ENCODE measurements at regions of chr19 and their contacts with region 1.

Region 1: DNA sequence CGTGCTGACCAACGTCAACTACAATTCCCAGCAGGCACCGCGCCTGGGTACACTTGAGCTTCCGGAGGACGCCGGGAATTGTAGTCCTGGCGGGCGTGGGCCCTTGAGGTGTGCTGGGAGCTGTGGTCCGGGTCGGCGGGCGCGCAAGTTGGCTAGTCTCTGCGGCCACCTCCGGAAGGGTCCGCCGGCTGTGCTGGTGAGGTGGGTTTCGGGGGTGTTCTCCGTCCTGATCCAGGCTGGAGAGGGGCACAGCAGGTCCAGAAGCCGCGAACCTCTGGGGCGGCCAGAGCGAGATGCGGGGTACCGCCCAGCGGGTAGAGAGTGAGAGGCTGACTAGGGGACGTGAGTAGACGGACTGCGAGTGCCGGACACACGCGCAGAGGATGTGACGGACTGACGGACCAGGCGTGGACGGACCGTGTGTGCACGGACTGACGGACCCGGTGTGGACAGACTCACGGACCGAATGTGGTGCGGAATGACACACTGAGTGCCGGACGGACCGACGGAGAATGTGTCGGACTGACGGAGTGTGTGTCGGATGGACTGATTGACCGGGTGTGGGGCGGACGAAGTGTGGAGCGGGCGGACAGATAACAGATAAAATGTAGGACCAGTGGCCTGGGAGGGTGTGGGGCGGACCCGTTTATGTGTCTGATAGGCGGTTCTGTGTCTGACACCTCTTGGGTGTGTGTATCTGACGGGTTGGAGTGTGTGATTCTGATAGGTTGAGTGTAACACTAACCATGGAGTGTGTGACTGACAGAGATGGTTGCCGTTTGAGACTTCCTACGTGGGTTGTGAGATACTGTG is at the start of gene ZSCAN22:
- DNase-seq: peak; percentile 98 to 99 (median 98)
- ATAC-seq: peak; percentile 98
- H3K4me3 ChIP-seq: peak within 1 kb of the TSS; percentile 73
- H3K27ac ChIP-seq: peak within 1 kb of the TSS; percentile 83
- H3K4me1 ChIP-seq: no peaks in the 10 kb centered on the region
- H3K27me3 ChIP-seq: no peaks in the 10 kb centered on the region
- total RNA-seq, gene ZSCAN22: 1.4 to 2.1 (median 1.9) TPM

Region 2: GRCh38 chr19:58084596-58085347 is 242.3 kb before region 1 on chr19:
- intact Hi-C with region 1: loop called in 1 of 4 experiments (anchors 5 kb)
- DNase-seq: no peak
- ATAC-seq: peak; percentile 27 to 41
- H3K4me3 ChIP-seq: no peak overlapping the region
- H3K27ac ChIP-seq: no peak overlapping the region
- H3K4me1 ChIP-seq: no peaks in the 10 kb centered on the region
- H3K27me3 ChIP-seq: no peaks in the 10 kb centered on the region

Region 3: GRCh38 chr19:58284199-58284598 is 42.9 kb before region 1 on chr19:
- intact Hi-C with region 1: no loop called
- DNase-seq: no peak
- ATAC-seq: no peak
- H3K4me3 ChIP-seq: no peak overlapping the region
- H3K27ac ChIP-seq: no peak overlapping the region
- H3K4me1 ChIP-seq: peaks cover 5% of the 10 kb centered on the region
- H3K27me3 ChIP-seq: no peaks in the 10 kb centered on the region

Region 4: DNA sequence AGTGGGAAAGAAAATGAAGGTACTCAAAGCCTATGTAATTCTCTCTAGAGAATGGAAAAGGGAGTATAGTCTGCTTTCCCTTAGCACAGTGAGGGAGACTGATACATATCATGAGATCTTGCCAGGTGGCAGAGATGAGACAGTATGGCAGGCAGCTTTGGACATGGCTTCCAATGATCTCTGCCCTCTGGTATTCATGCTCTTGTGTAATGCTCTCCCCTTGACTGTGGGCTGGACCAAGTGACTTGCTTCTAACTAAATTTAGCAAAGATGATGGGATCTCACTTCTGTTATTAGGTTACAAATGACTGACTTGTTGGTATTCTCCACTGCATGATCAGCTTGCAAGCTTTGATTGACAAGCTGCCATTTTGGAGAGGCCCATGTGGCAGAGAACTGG is 102.6 kb after region 1 on chr19:
- intact Hi-C with region 1: no loop called
- DNase-seq: no peak
- ATAC-seq: no peak
- H3K4me3 ChIP-seq: no peak overlapping the region
- H3K27ac ChIP-seq: no peak overlapping the region
- H3K4me1 ChIP-seq: no peaks in the 10 kb centered on the region
- H3K27me3 ChIP-seq: no peaks in the 10 kb centered on the region